CD4-positive, alpha-beta memory T cell (primary cell): ENCODE measurements at regions of chr19 and their contacts with region 1.

Region 1: GRCh38 chr19:36214386-36215275 is at the starts of genes ZNF146 and ZNF565:
- DNase-seq: peak; percentile 96 to 98 (median 97)
- H3K4me3 ChIP-seq: peak within 1 kb of the TSS; percentile 76 to 98
- H3K4me3 Mint-ChIP-seq: no peak within 1 kb of the TSS
- H3K27ac ChIP-seq: peak within 1 kb of the TSS; percentile 96
- H3K27ac Mint-ChIP-seq: no peak within 1 kb of the TSS
- H3K4me1 ChIP-seq: peaks cover 35% of the 10 kb centered on the region
- H3K4me1 Mint-ChIP-seq: peaks cover 15 to 26% (median 17%) of the 10 kb centered on the region in 4 donors
- H3K27me3 ChIP-seq: no peaks in the 10 kb centered on the region
- H3K27me3 Mint-ChIP-seq: no peaks in the 10 kb centered on the region
- total RNA-seq, gene ZNF146: 74.9 to 75.7 TPM
- total RNA-seq, gene ZNF565: 8.4 to 10.9 TPM

Region 2: GRCh38 chr19:36114763-36115452 is 99.7 kb before region 1 on chr19 and contains the start of gene POLR2I:
- CTCF ChIA-PET with region 1: no interaction called
- POLR2A ChIA-PET with region 1: interaction called, 29 read pairs
- intact Hi-C with region 1: no loop called
- DNase-seq: peak; percentile 99 to 100 (median 100)
- H3K4me3 ChIP-seq: peak within 1 kb of the TSS; percentile 75 to 99
- H3K4me3 Mint-ChIP-seq: peak within 1 kb of the TSS; percentile 89 to 99 (median 94)
- H3K27ac ChIP-seq: peak within 1 kb of the TSS; percentile 80
- H3K27ac Mint-ChIP-seq: peak within 1 kb of the TSS; percentile 95 to 100 (median 98)
- H3K4me1 ChIP-seq: peaks cover 30% of the 10 kb centered on the region
- H3K4me1 Mint-ChIP-seq: peaks cover 23 to 53% (median 37%) of the 10 kb centered on the region in 4 donors
- H3K27me3 ChIP-seq: no peaks in the 10 kb centered on the region
- H3K27me3 Mint-ChIP-seq: peaks cover 0 to 2% of the 10 kb centered on the region in 2 donors
- total RNA-seq, gene POLR2I: 52.4 to 55.0 TPM

Region 3: GRCh38 chr19:36182612-36183244 is 31.9 kb before region 1 on chr19:
- CTCF ChIA-PET with region 1: no interaction called
- POLR2A ChIA-PET with region 1: no interaction called
- intact Hi-C with region 1: no loop called
- DNase-seq: no peak
- H3K4me3 ChIP-seq: no peak overlapping the region
- H3K4me3 Mint-ChIP-seq: no peak overlapping the region
- H3K27ac ChIP-seq: no peak overlapping the region
- H3K27ac Mint-ChIP-seq: no peak overlapping the region
- H3K4me1 ChIP-seq: no peaks in the 10 kb centered on the region
- H3K4me1 Mint-ChIP-seq: peaks cover 0 to 1% (median 0%) of the 10 kb centered on the region in 4 donors
- H3K27me3 ChIP-seq: no peaks in the 10 kb centered on the region
- H3K27me3 Mint-ChIP-seq: no peaks in the 10 kb centered on the region

Region 4: DNA sequence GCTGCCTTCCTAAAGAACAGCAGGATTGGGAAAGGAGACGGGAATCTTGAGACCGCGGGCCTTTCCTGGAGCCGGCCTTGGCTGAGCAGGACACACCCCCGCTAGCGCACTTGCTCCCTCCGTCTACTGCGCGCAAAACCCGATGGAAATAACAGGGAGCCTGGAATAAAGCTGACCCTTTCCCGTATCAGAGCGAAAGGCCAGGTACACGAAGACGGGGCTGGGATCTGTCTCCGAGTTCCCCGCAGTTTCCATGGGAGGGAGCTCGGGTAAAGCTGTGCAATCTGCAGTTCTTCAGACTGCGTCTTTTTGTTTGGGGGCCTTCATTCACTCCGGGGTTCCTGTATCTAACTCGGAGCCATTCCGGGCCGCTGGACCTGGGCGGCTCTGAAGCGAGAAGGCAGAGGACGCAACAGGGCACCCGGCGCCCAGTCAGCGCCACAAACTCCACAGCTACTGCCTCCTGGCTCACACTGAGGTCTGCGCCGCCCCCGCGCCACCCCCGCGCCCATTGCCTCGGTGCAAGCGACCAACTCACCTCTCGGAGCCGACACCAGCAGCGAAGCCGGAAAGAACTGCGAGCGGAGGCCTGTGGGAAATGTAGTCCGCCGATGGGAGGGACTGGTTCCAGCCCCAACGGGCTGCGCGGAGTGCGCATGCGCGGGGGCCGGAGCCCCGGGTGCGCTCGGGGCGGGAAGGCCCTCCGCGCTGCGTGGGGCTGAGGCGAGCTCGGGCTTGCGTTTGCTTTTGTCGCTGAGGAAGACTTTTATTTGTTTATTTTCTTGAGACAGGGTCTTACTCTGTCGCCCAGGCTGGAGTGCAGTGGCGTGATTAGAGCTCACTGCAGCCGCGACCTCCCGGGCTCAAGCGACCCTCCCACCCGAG is 164.2 kb after region 1 on chr19 and contains the start of gene ZFP14:
- CTCF ChIA-PET with region 1: no interaction called
- POLR2A ChIA-PET with region 1: interaction called, 11 read pairs
- intact Hi-C with region 1: loop called (anchors 2 kb)
- DNase-seq: peak; percentile 92 to 96 (median 95)
- H3K4me3 ChIP-seq: peak within 1 kb of the TSS; percentile 76 to 87
- H3K4me3 Mint-ChIP-seq: peak within 1 kb of the TSS; percentile 87 to 96 (median 94)
- H3K27ac ChIP-seq: peak within 1 kb of the TSS; percentile 76
- H3K27ac Mint-ChIP-seq: peak within 1 kb of the TSS; percentile 81 to 97 (median 93)
- H3K4me1 ChIP-seq: peaks cover 18% of the 10 kb centered on the region
- H3K4me1 Mint-ChIP-seq: peaks cover 13 to 34% (median 18%) of the 10 kb centered on the region in 4 donors
- H3K27me3 ChIP-seq: no peaks in the 10 kb centered on the region
- H3K27me3 Mint-ChIP-seq: no peaks in the 10 kb centered on the region
- total RNA-seq, gene ZFP14: 20.7 to 21.2 TPM

Region 5: DNA sequence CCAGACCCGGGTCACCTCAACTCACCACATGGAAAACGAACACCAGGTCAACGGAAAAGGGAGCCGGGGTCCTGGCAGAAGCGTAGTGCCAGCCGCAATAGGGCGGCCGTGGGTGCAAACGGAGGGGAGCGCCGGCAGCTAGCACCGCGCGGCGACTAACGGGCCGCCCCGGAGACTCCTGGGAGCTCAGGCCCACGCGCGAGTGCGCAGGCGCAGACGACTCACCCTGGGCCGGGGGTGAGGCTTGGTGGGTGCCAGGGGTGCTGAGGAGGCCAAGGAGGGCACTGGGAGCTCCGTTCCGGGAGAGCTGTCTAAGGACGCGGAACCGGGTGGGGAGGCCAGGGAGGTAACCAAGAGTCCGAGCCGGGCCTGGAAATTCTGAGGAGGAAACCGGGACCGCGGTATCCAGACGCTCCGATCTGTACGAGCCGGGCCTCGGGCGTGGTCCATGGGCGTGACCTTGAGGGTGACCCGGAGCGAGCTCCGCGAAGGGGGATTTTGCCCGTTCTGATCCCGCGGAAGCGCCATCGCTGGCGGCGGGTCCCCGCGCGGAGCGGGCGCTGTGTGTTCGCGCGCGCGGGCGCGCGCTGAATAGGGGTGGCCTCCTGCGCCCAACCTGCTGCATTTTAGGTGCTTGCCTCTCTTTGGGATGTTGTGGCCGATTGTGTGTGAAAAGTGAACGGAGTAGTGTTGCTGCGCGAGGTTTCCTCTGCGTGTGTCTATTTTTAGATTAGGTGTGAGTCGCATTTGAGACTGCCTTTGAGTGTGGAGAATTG is 390.7 kb after region 1 on chr19 and contains the start of gene ZNF382:
- CTCF ChIA-PET with region 1: no interaction called
- POLR2A ChIA-PET with region 1: interaction called, 6 read pairs
- intact Hi-C with region 1: loop called (anchors 10 kb)
- DNase-seq: peak; percentile 85 to 89 (median 86)
- H3K4me3 ChIP-seq: peak within 1 kb of the TSS; percentile 32 to 85
- H3K4me3 Mint-ChIP-seq: peak within 1 kb of the TSS; percentile 90 to 99 (median 96)
- H3K27ac ChIP-seq: peak within 1 kb of the TSS; percentile 91
- H3K27ac Mint-ChIP-seq: peak within 1 kb of the TSS; percentile 82 to 98 (median 92)
- H3K4me1 ChIP-seq: peaks cover 16% of the 10 kb centered on the region
- H3K4me1 Mint-ChIP-seq: peaks cover 17 to 33% (median 23%) of the 10 kb centered on the region in 4 donors
- H3K27me3 ChIP-seq: no peaks in the 10 kb centered on the region
- H3K27me3 Mint-ChIP-seq: peaks cover 0 to 1% of the 10 kb centered on the region in 2 donors
- total RNA-seq, gene ZNF382: 21.1 to 21.9 TPM

Region 6: DNA sequence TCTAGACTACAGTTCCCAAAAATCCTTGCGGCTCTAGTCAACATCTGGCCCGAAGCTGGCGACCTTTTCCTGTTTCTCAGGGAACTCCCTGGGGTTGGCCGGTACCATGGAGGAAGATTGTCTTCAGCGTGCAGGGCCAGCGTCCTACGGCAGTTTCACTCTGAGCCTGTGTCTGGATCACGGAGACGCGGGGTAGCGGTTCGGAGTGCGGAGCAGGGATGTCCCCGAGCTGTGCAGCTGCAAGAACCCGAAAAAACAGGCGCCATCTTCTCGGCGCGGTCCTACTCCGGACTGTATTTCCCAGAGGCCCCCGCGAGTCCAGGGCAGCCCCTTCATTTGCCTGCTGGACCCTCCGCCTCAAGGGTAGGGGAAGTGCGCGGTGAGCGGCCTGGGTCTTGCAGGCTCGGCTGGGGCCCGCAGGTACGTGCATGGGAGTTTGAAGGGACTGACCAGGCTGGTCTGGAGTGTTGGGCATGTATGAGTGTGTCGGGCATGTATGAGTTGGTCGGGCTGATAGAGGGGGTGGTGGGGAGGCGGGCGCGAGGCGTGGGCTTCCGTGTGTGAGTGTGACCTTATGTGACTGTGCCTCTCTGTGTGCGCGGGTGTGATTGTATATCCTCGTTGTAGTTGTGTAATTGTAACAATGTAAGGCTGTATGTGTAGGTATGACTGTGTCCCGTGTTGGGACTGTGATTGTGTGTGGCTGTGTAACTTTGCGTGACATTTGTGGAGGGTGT is 1003.4 kb after region 1 on chr19 and contains the start of gene ZNF383:
- CTCF ChIA-PET with region 1: no interaction called
- POLR2A ChIA-PET with region 1: interaction called, 17 read pairs
- intact Hi-C with region 1: loop called (anchors 10 kb)
- DNase-seq: peak; percentile 80 to 87 (median 83)
- H3K4me3 ChIP-seq: peak within 1 kb of the TSS; percentile 85 to 99
- H3K4me3 Mint-ChIP-seq: peak within 1 kb of the TSS; percentile 89 to 98 (median 91)
- H3K27ac ChIP-seq: peak within 1 kb of the TSS; percentile 80
- H3K27ac Mint-ChIP-seq: peak within 1 kb of the TSS; percentile 88 to 98 (median 96)
- H3K4me1 ChIP-seq: peaks cover 16% of the 10 kb centered on the region
- H3K4me1 Mint-ChIP-seq: peaks cover 19 to 40% (median 31%) of the 10 kb centered on the region in 4 donors
- H3K27me3 ChIP-seq: no peaks in the 10 kb centered on the region
- H3K27me3 Mint-ChIP-seq: no peaks in the 10 kb centered on the region
- total RNA-seq, gene ZNF383: 32.0 to 34.0 TPM

Region 7: DNA sequence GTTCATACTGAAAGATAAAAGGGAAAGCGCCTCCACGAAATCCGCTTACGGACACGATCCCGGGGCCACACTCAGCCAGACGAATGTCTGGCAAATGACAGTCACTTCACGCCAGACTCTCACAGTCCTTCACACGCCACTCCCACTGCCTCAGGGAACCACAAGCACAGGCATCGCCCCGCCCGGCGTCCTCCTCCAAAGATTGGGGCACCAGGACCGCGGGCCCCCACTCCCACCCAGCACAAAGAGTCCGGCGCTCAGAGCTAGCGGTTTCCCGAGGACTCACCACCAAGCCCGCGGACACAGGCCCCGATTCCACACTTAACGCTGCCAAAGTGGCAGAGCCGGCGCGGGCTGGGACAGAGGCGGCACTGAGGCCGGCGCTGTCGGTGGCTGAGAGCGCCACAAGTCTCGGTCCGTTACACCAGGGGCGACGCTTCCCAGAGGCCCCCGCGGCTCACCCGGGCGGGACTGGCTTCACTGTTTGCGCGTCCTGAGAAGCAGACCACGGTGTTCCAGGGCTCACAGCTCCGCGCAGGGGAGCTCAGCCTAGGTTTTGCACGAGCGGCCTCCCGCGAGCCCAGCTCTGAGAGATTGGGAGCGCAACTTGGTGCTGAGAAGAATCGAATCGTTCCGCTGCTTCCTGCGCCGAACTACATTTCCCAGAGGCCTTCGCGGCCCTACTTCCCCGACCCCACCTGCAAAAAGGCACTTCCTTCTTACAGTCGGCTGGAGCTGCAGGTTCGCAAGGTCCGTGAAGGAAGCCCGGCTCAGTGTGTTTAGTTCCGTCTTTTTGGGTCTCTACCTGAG is 1252.4 kb after region 1 on chr19 and contains the start of gene ZNF569:
- CTCF ChIA-PET with region 1: no interaction called
- POLR2A ChIA-PET with region 1: interaction called, 5 read pairs
- intact Hi-C with region 1: loop called (anchors 2 kb)
- DNase-seq: peak; percentile 91 to 96 (median 93)
- H3K4me3 ChIP-seq: peak within 1 kb of the TSS; percentile 63 to 83
- H3K4me3 Mint-ChIP-seq: peak within 1 kb of the TSS; percentile 95 to 99 (median 97)
- H3K27ac ChIP-seq: peak within 1 kb of the TSS; percentile 74
- H3K27ac Mint-ChIP-seq: peak within 1 kb of the TSS; percentile 95 to 99 (median 98)
- H3K4me1 ChIP-seq: peaks cover 31% of the 10 kb centered on the region
- H3K4me1 Mint-ChIP-seq: peaks cover 28 to 45% (median 35%) of the 10 kb centered on the region in 4 donors
- H3K27me3 ChIP-seq: no peaks in the 10 kb centered on the region
- H3K27me3 Mint-ChIP-seq: no peaks in the 10 kb centered on the region
- total RNA-seq, gene ZNF569: 13.5 to 14.9 TPM

Region 8: DNA sequence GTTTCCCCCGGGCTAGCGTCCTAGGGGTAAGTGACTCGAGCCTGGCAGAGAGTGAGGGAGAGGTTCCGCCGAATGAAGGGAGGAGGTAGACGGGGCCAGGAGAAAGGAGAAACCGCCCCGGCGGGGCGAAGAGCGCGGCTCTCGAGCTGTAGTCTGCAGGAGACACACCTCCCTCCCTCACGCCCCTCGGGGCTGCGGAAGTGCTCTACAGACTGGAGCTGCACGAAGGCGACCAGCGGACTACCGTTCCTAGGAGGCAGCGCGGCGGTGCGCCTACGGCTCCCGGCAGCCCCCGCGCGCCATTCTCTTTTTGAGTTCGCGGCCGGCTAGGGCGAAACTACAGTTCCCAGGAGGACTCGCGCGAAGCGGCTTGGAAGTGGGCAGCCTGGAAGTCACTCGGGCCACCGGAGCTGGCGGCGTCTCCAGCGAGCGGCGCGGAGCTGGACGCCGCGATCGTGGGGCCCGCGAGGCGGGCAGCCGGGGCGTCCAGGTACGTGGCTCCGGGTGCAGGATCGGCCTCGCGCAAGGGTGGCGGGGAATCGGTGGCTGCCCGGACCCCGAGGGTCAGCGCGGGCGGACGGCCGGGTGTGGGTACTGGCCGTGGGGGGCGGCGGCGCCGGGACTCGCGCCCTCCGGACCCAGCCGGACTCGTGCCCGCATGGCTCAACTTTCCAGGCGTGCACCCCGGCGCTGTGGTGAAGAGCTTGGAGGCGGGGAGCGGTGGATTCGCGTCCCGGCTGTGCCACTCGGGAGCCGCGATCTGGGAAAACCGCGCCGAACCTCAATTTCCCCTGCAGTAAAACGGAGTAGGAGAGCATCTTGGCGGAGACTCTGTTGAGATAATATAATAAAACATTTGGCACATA is 1692.5 kb after region 1 on chr19 and contains the start of gene SIPA1L3:
- CTCF ChIA-PET with region 1: no interaction called
- POLR2A ChIA-PET with region 1: no interaction called
- intact Hi-C with region 1: loop called (anchors 2 kb)
- DNase-seq: peak; percentile 89 to 92 (median 90)
- H3K4me3 ChIP-seq: peak within 1 kb of the TSS; percentile 63 to 96
- H3K4me3 Mint-ChIP-seq: peak within 1 kb of the TSS; percentile 92 to 96 (median 93)
- H3K27ac ChIP-seq: peak within 1 kb of the TSS; percentile 71
- H3K27ac Mint-ChIP-seq: peak within 1 kb of the TSS; percentile 86 to 95 (median 91)
- H3K4me1 ChIP-seq: peaks cover 22% of the 10 kb centered on the region
- H3K4me1 Mint-ChIP-seq: peaks cover 16 to 36% (median 25%) of the 10 kb centered on the region in 4 donors
- H3K27me3 ChIP-seq: no peaks in the 10 kb centered on the region
- H3K27me3 Mint-ChIP-seq: no peaks in the 10 kb centered on the region
- total RNA-seq, gene SIPA1L3: 31.8 to 35.0 TPM